ENCODE measurements at regions of chr16 and their contacts with region 1.

Region 1: DNA sequence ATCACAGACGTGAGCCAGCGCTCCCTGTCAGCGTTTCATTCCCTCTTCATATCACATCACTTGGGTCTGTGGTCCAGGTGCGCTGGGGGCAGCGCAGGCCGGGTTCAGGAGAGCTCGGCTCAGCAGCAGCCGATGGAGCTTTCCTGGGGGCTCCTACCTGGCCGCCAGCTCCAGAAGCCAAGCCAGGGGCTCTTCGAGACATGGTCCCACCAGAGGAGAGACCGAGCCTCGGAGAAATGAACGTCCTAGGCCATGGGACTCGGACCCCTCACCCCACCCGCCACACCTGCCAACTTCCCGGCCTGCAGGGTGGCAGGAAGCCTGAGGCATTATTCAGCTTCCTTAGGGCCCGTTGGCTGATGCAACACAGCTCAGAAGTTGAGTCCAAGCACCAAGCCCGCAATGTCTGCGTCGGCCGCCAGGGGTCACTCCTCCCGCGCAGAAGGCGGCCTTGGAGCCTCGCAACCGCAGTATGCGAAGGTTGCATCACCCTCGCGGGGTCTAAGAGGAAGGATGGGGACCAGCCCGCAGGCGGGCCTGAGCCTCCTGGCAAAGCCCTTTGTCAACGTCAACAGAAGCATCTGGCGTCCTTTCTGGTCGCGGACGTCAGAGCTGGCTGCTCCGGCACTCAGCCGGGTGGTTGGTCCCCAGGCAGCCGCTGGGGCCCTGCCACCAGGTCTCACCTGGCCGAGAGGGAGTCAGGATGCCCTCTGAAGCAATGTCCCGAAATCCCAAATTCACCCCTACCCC is 13.2 kb upstream of the KLHDC4 start:
- DNase-seq: peak; percentile 97
- H3K4me3 ChIP-seq: peak overlapping the region; percentile 15
- H3K27ac ChIP-seq: peak overlapping the region; percentile 99
- H3K4me1 ChIP-seq: peaks cover 45% of the 10 kb centered on the region
- H3K27me3 ChIP-seq: no peaks in the 10 kb centered on the region
- CTCF ChIP-seq: peak; percentile 93

Region 2: DNA sequence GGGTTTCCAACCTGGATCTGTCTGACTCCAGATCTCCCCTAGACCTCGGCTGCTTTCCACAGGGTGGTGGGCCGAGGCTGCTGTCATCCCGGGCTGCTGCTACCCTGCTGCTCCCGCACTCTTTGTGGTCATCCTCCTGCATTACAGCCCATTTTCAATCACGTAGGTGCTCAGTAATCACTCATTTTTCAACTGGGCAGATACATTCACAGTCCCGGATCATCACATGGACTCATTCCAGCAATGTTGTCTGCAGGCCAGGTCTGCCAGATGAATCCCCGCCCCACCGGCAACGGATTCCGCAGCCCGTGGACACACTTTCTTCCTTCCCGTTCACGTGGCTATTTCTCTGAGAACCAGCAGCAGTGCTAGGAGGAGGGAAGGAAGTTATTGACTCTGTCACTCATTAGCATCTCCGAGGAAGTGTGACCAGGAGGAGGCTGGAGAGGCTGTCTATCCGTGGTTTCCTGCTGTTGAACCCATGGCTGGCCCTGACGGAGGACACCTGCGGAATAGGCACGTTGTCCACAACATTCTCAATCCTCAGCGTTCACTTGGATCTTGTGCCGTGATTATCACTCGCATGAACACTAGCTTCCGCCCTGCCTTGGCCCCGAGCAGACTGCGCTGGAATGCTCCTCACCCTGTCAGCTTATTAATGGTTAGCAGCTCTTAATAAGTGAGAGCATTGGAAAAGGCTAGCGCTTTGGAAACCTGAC is 271.5 kb before region 1 on chr16:
- CTCF ChIA-PET with region 1: no interaction called
- POLR2A ChIA-PET with region 1: no interaction called
- intact Hi-C with region 1: no loop called
- DNase-seq: no peak
- H3K4me3 ChIP-seq: no peak overlapping the region
- H3K27ac ChIP-seq: no peak overlapping the region
- H3K4me1 ChIP-seq: no peaks in the 10 kb centered on the region
- H3K27me3 ChIP-seq: no peaks in the 10 kb centered on the region
- CTCF ChIP-seq: no peak

Region 3: GRCh38 chr16:87765776-87766484 is 13.1 kb before region 1 on chr16 and contains the start of gene KLHDC4:
- CTCF ChIA-PET with region 1: interaction called, 11 read pairs
- POLR2A ChIA-PET with region 1: interaction called, 3 read pairs
- intact Hi-C with region 1: no loop called
- DNase-seq: peak; percentile 92
- H3K4me3 ChIP-seq: peak within 1 kb of the TSS; percentile 96
- H3K27ac ChIP-seq: peak within 1 kb of the TSS; percentile 94
- H3K4me1 ChIP-seq: peaks cover 7% of the 10 kb centered on the region
- H3K27me3 ChIP-seq: no peaks in the 10 kb centered on the region
- CTCF ChIP-seq: no peak
- total RNA-seq, gene KLHDC4: 83.3 and 86.6 TPM in 2 replicates

Region 4: DNA sequence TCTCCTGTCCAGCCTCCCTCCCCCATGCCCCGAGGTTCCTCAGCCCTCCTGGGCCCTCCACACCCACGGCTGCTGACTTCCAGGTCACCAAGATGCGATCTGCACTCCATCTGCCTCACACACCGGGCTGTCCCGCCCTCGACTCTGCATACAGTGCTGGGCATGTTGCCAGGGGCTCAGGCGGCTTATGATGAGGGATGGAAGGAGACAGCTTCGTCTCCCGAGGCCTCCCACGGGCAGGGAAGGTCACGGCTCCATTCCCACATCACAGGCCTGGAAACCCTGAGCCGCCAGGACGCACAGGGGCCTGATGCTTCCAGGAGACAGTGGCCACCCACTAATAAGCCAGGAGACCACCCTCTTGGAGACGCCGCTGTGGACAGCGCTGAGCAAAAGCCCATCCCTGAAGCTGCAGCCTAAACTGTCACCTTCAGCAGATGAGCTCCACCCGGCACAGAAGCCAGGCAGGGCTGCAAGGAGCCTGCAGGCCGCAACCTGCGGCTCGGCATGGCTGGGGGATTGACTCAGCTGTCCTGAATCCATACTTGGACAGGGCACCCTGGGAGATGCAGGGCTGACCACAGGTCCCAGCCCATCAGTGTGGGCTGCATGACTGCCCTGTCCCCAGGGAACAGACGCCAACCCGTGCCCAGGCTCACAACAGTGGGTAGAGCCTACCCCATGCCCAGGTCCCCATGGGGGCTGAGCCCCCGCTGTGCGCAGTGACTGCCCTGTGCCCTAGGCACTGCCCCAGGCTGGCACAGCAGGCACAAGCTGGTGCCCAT is 55.8 kb after region 1 on chr16:
- CTCF ChIA-PET with region 1: interaction called, 25 read pairs
- POLR2A ChIA-PET with region 1: interaction called, 3 read pairs
- intact Hi-C with region 1: loop called (anchors 5 kb)
- DNase-seq: peak; percentile 82
- H3K4me3 ChIP-seq: no peak overlapping the region
- H3K27ac ChIP-seq: peak overlapping the region; percentile 27
- H3K4me1 ChIP-seq: peaks cover 68% of the 10 kb centered on the region
- H3K27me3 ChIP-seq: no peaks in the 10 kb centered on the region
- CTCF ChIP-seq: no peak

Region 5: DNA sequence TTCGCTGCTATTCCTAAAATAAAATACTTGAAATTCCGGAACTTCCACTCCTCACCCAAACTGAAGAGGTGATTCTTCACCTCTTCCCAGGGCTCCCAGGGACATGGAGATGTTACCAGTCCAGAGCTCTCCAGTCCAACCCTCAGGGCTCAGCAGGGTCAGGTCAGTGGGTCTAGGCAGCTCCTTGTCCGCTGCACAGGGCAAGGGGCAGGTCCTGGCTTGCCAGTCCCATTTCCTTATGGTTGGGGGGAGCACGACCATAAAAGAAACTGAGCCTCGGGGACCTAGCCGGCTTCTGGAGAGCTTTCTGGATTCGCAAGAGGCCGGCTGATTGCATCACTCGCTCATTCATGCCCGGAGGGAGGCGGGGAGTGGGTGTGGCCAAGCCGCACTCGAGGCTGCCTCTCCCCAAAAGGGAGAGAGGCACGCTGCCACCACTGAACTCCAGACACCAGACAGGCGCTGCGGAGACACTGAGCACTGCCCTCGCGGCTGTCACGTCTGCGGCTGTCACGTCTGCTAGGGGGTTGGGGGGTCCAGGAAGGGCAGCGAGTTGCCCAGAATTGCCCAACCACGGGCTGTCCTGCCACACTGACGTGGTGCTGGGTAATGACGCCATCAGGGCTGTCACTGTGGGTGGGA is 74.5 kb after region 1 on chr16:
- CTCF ChIA-PET with region 1: interaction called, 24 read pairs
- POLR2A ChIA-PET with region 1: interaction called, 3 read pairs
- intact Hi-C with region 1: loop called (anchors 5 kb)
- DNase-seq: peak; percentile 97
- H3K4me3 ChIP-seq: peak overlapping the region; percentile 31
- H3K27ac ChIP-seq: peak overlapping the region; percentile 100
- H3K4me1 ChIP-seq: peaks cover 73% of the 10 kb centered on the region
- H3K27me3 ChIP-seq: no peaks in the 10 kb centered on the region
- CTCF ChIP-seq: no peak

Region 6: GRCh38 chr16:87860553-87861299 is 81.7 kb after region 1 on chr16:
- CTCF ChIA-PET with region 1: interaction called, 98 read pairs
- POLR2A ChIA-PET with region 1: interaction called, 3 read pairs
- intact Hi-C with region 1: no loop called
- DNase-seq: no peak
- H3K4me3 ChIP-seq: no peak overlapping the region
- H3K27ac ChIP-seq: peak overlapping the region; percentile 49
- H3K4me1 ChIP-seq: peaks cover 55% of the 10 kb centered on the region
- H3K27me3 ChIP-seq: no peaks in the 10 kb centered on the region
- CTCF ChIP-seq: no peak

Region 7: GRCh38 chr16:88437373-88437964 is 658.5 kb after region 1 on chr16:
- CTCF ChIA-PET with region 1: no interaction called
- POLR2A ChIA-PET with region 1: no interaction called
- intact Hi-C with region 1: loop called (anchors 5 kb)
- DNase-seq: peak; percentile 58
- H3K4me3 ChIP-seq: no peak overlapping the region
- H3K27ac ChIP-seq: no peak overlapping the region
- H3K4me1 ChIP-seq: no peaks in the 10 kb centered on the region
- H3K27me3 ChIP-seq: peaks cover 5% of the 10 kb centered on the region
- CTCF ChIP-seq: peak; percentile 94

Region 8: DNA sequence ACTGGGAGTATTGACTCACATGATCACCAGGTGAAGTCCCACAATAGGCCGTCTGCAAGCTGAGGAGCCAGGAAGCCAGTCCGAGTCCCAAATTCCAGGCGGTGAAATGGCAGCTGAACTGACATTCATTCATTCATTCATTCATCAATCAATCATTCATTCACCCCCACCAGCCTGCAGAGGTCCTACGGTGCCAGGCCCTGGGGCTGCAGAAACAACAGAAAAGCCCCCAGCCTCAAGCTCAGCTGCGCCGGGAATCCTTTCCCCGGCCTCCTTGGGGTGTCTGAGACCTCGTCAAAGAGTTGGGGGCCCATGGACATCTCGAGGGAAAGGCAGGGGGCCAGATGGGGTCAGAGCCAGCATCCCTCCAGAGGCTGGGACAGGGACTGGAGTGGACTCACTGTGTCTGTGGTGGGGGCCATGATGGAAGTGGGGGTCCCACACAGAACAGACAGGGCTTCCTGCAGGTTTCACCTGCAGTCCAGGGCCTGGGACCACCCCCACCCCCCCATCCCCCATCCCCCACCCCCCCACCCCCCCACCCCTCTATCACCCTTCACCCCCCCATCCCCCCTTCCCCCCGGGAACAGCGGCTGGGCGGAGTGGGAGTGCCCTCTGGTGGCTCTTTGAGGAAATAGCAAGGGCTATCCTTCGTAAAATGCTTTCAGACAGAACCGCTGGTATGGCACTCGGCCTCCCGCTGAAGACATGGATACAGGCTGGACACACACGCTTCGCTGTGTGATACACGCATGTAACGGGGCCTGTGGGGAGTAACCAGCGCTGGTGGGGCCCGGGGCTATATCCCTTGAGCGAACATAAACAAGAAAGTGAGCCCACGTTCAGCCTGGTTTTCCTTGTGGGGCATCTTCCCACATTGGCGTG is 782.7 kb after region 1 on chr16:
- CTCF ChIA-PET with region 1: no interaction called
- POLR2A ChIA-PET with region 1: no interaction called
- intact Hi-C with region 1: loop called (anchors 5 kb)
- DNase-seq: peak; percentile 69
- H3K4me3 ChIP-seq: peak overlapping the region; percentile 35
- H3K27ac ChIP-seq: no peak overlapping the region
- H3K4me1 ChIP-seq: peaks cover 3% of the 10 kb centered on the region
- H3K27me3 ChIP-seq: peaks cover 17% of the 10 kb centered on the region
- CTCF ChIP-seq: peak; percentile 68